ENCODE measurements at regions of chr3 and their contacts with region 1.

Region 1: DNA sequence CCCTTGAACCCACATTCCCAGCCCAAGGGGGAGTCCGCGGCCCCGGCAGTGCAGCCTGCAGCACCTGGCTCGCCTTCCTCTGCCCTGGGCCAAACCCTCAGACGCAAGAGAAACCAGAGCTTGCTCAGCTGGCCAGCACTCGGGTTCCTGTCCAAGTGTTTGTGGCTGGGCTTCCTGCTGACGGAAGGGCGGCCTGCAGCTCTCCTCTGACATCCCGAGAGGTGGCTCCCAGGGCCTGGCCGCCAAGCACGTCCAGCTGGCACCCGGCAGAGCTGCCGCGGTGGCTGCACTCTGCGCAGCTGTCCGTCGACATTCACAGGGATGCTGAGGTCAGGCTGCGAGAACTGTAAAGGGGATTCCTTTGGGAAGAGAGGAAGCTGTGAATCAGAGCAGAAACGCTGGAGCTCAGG is 85.6 kb downstream of the CPN2 start:
- DNase-seq: no peak
- ATAC-seq: peak; percentile 63
- H3K4me3 ChIP-seq: no peak overlapping the region
- H3K27ac ChIP-seq: no peak overlapping the region
- H3K4me1 ChIP-seq: peaks cover 11% of the 10 kb centered on the region
- H3K27me3 ChIP-seq: no peaks in the 10 kb centered on the region
- CTCF ChIP-seq: no peak

Region 2: DNA sequence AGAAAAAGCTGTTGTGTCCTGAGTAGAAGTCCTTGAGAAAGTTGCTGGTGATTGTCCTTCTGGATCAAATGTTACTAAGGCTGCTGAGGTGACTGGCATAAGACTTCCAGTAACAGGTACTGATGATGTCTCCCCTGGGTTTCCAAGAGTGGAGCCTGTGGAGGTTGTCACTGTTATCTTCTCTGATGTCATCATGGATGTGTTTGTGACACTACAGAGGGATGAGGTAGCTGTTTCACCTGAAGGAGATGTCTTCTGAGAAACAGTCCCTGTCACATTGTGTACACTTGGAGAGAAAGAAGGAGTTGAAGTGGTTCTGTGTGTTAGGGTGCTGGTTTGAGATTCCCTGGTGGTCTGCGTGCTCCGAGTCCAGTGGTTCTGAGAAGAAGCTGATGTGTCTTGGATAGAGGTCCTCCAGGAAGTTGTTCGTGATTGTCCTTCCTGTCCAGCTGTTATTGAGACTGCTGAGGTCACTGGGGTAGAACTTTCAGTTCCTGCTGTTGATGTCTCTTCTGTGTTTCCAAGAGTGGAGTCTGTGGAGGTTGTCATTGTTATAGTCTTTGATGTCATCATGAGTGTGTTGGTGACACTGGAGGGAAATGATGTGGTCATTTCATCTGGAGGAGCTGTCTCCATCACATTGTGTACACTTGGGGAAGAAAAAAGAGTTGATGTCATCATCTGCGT is 1525.3 kb after region 1 on chr3:
- CTCF ChIA-PET with region 1: no interaction called
- POLR2A ChIA-PET with region 1: interaction called, 10 read pairs
- in situ Hi-C with region 1: no loop called
- intact Hi-C with region 1: no loop called
- DNase-seq: no peak
- ATAC-seq: no peak
- H3K4me3 ChIP-seq: no peak overlapping the region
- H3K27ac ChIP-seq: no peak overlapping the region
- H3K4me1 ChIP-seq: no peaks in the 10 kb centered on the region
- H3K27me3 ChIP-seq: no peaks in the 10 kb centered on the region; the same call in 1 of the 2 replicates
- CTCF ChIP-seq: no peak

Measured in Panc1 (cell line).